ENCODE measurements at regions of chr20 and their contacts with region 1.

Region 1: GRCh38 chr20:21490095-21490494 is 23.8 kb downstream of the NKX2-2 start:
- DNase-seq: no peak
- H3K4me3 ChIP-seq: no peak overlapping the region
- H3K27ac ChIP-seq: no peak overlapping the region
- H3K4me1 ChIP-seq: no peaks in the 10 kb centered on the region
- H3K27me3 ChIP-seq: no peaks in the 10 kb centered on the region
- CTCF ChIP-seq: peak in 1 of 2 donors; percentile 37

Region 2: GRCh38 chr20:21395666-21396598 is 94.2 kb before region 1 on chr20:
- CTCF ChIA-PET with region 1: no interaction called
- dilution Hi-C with region 1: no loop called
- in situ Hi-C with region 1: no loop called
- intact Hi-C with region 1: loop called (anchors 5 kb)
- DNase-seq: peak; percentile 25
- H3K4me3 ChIP-seq: no peak overlapping the region
- H3K27ac ChIP-seq: no peak overlapping the region
- H3K4me1 ChIP-seq: peaks cover 9% of the 10 kb centered on the region
- H3K27me3 ChIP-seq: peaks cover 46% of the 10 kb centered on the region
- CTCF ChIP-seq: no peak

Region 3: DNA sequence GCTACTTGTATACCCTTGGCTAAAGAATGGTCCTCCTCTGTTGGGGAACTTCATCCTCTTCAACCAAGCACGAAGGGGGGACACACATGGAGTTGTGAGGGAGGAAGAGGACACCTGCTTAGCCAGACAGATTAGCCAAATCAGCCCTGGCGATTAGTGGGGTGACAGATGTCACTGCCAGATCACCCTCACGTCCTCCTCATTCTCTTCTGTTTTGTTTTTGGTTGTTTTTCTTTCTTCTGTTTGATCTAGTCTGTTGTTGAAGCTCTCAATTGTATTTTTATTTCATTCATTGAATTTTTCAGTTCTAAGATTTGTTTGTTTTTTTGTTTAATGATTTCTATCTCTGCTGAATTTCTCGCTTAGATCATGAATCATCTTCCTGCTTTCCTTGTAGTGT is 65.2 kb before region 1 on chr20:
- CTCF ChIA-PET with region 1: no interaction called
- dilution Hi-C with region 1: no loop called
- in situ Hi-C with region 1: no loop called
- intact Hi-C with region 1: no loop called
- DNase-seq: no peak
- H3K4me3 ChIP-seq: no peak overlapping the region
- H3K27ac ChIP-seq: no peak overlapping the region
- H3K4me1 ChIP-seq: no peaks in the 10 kb centered on the region
- H3K27me3 ChIP-seq: no peaks in the 10 kb centered on the region
- CTCF ChIP-seq: no peak

Measured in mammary epithelial cell (primary cell).